Endothelial cell of umbilical vein (primary cell): ENCODE measurements at regions of chr7 and their contacts with region 1.

Region 1: DNA sequence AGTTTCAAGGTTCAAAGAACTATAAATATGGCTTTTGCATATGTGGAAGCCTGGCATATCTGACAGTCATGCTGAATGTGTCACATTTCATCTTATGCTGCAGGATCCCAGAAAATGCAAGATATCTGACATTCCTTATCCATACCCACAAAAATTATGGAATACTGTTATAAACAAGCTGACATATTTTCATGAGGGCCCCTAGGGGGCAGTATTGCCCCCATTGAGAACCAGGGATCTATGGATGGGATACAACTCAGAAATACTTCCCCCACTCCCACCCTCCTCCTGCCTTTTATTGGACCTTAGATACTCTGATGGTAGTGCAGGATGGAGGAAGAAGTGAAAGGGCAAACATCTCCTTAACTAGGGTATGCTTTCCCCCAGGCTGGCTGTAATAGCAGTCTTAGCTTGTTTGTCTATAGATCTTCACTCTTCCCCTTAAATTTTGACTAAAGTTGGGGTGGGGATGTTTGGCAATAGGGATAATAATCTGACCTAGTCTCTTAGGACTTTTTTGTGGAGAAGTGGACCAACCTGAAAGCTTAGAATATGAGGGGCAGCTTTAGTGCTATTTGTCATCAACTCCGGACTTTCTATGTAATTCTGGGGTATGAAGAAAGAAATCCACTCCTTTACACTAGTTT is 3.5 kb upstream of the GNGT1 start:
- DNase-seq: peak; percentile 83
- H3K4me3 ChIP-seq: no peak overlapping the region
- H3K27ac ChIP-seq: no peak overlapping the region
- H3K4me1 ChIP-seq: peaks cover 7% of the 10 kb centered on the region
- H3K27me3 ChIP-seq: peaks cover 3 to 12% of the 10 kb centered on the region in 2 experiments
- CTCF ChIP-seq: peak; percentile 75
- POLR2A ChIP-seq: no peak

Region 2: GRCh38 chr7:93799750-93800357 is 103.0 kb before region 1 on chr7:
- CTCF ChIA-PET with region 1: interaction called, 13 read pairs
- POLR2A ChIA-PET with region 1: no interaction called
- dilution Hi-C with region 1: no loop called
- intact Hi-C with region 1: loop called (anchors 1 kb)
- DNase-seq: peak; percentile 43
- H3K4me3 ChIP-seq: no peak overlapping the region
- H3K27ac ChIP-seq: no peak overlapping the region
- H3K4me1 ChIP-seq: no peaks in the 10 kb centered on the region
- H3K27me3 ChIP-seq: no peaks in the 10 kb centered on the region
- CTCF ChIP-seq: peak; percentile 32 to 45
- POLR2A ChIP-seq: no peak

Region 3: DNA sequence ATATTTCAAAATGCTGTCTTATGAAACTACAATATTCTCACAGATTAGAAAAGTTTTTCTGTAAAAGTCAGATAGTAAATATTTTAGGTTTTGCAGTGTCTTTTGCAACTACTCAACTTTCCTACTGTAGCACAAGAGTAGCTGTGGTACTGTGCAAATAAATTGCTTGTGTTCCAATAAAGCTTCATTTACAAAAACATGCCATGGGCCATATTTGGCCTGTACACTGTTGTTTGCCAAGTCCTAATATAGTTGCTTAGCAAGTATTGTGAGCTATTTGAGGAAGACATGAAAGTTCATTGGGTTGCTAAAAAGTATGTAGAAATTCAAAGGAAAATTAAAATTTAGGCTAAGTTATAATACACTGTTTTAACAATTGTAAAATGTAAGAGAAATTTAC is 92.3 kb before region 1 on chr7:
- CTCF ChIA-PET with region 1: no interaction called
- POLR2A ChIA-PET with region 1: no interaction called
- dilution Hi-C with region 1: no loop called
- intact Hi-C with region 1: no loop called
- DNase-seq: no peak
- H3K4me3 ChIP-seq: no peak overlapping the region
- H3K27ac ChIP-seq: no peak overlapping the region
- H3K4me1 ChIP-seq: no peaks in the 10 kb centered on the region
- H3K27me3 ChIP-seq: peaks cover 0 to 2% of the 10 kb centered on the region in 2 experiments
- CTCF ChIP-seq: no peak
- POLR2A ChIP-seq: no peak

Region 4: DNA sequence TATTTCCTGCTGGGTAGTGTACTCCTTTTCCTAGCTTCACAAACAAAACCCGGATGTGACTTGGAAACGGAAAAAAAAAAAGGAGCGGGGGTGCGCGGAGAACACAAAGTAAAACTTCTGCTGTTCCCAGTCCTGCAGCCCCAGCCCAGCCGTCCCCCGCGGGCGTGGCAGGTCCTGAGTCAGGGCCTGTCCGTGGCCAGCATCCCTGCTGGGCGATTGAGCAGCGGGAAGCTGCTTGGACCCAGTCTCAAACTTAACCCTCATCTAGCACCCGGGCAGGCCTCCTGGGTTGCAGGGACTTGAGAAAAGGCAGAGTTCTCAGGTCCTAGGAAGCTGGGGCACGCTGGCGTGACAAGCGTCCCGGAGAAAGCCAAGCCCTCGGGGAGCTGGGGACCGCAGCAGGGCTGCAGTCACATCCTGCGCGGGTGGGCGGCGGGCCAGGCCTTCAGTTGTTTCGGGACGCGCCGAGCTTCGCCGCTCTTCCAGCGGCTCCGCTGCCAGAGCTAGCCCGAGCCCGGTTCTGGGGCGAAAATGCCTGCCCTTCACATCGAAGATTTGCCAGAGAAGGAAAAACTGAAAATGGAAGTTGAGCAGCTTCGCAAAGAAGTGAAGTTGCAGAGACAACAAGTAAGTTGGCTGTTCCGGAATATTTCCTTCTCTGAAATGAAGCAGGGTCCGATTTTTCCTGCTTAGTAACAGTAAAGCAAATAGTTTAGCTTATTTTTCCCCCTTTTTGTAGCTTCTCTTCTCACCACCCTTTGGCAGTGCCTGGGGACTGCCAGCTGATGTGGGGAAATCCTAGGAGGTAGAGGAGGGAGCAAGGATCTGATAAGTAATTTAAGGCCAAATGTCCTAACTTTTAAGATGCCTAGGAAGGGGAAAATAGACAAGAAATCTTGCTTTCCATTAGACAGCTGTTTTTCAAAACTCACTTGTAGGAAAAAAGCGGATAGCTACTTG is 19.0 kb after region 1 on chr7 and contains the start of gene GNG11:
- CTCF ChIA-PET with region 1: interaction called, 34 read pairs
- POLR2A ChIA-PET with region 1: no interaction called
- dilution Hi-C with region 1: no loop called
- intact Hi-C with region 1: loop called (anchors 1 kb)
- DNase-seq: peak; percentile 90
- H3K4me3 ChIP-seq: peak within 1 kb of the TSS; percentile 95 to 100 (median 100)
- H3K27ac ChIP-seq: peak within 1 kb of the TSS; percentile 99
- H3K4me1 ChIP-seq: peaks cover 25% of the 10 kb centered on the region
- H3K27me3 ChIP-seq: no peaks in the 10 kb centered on the region
- CTCF ChIP-seq: no peak
- POLR2A ChIP-seq: peak; percentile 86
- total RNA-seq, gene GNG11: 208 and 215 TPM in 2 replicates

Region 5: DNA sequence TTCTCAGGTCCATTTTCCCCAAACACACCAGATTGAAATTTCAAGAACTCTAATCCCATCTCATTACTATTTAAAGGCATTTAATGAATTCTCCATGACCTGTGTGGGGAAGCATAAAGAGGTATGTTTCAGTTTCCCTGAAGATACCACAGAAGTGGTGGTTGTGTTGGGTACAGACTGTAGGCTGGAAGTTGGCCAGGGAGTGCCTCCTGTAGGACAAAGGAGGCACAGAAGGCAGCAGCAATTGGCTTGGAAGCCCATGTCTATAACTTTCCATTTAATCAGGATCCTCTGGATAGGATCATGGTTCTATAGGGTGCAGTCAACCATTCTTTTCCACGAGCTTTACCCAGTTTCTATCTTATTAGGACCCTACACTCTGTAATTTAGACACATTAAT is 109.8 kb after region 1 on chr7:
- CTCF ChIA-PET with region 1: interaction called, 13 read pairs
- POLR2A ChIA-PET with region 1: no interaction called
- dilution Hi-C with region 1: no loop called
- intact Hi-C with region 1: no loop called
- DNase-seq: no peak
- H3K4me3 ChIP-seq: no peak overlapping the region
- H3K27ac ChIP-seq: no peak overlapping the region
- H3K4me1 ChIP-seq: no peaks in the 10 kb centered on the region
- H3K27me3 ChIP-seq: peaks cover 3 to 9% of the 10 kb centered on the region in 2 experiments
- CTCF ChIP-seq: no peak
- POLR2A ChIP-seq: no peak

Region 6: DNA sequence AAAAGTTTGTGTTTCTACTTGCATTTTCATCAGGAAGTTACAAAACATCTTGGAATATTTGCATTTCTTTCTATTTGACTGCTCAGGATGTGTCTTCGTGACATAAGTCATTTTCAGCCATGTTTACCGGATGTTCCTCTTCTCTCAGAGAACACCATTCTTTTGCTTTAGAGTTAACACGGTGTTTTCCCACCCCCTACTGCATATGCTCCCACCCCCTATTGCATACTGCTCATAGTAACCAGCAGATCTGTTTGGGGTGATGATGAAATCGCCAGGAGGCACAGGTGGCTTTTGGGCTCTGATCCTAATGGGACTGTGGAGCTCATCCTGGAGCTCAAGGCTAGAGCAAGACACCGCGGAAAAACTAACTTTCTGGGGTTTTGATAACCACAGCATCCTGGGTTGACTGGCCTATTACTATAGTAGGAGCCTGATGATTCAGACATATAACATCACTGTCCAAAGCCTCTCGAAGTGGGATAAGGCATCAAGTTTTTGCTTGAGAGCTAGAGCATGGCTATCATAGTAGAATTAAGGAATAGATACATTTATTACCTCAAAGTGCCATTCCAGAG is 166.4 kb after region 1 on chr7:
- CTCF ChIA-PET with region 1: interaction called, 13 read pairs
- POLR2A ChIA-PET with region 1: interaction called, 7 read pairs
- dilution Hi-C with region 1: no loop called
- intact Hi-C with region 1: loop called (anchors 1 kb)
- DNase-seq: no peak
- H3K4me3 ChIP-seq: no peak overlapping the region
- H3K27ac ChIP-seq: no peak overlapping the region
- H3K4me1 ChIP-seq: peaks cover 20% of the 10 kb centered on the region
- H3K27me3 ChIP-seq: peaks cover 50 to 74% of the 10 kb centered on the region in 2 experiments
- CTCF ChIP-seq: no peak
- POLR2A ChIP-seq: no peak

Region 7: DNA sequence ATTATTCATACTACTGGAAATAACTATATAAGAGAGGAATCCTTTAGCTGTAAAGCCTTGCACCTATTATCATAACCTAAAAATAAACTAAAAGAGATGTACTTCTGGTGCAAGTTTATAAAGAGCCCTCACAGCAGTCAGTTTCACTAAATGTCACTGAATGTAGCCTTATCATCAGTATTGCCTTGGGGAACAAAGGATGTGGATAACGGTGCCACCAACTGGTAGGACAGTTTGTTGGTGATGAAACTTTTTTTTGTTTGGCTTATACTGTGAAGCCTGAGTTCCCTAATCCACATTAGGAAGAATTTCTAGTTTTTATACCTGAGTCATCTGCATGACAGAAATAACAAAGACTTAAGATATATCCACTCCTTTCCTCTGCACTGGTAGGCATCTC is 373.9 kb after region 1 on chr7:
- CTCF ChIA-PET with region 1: interaction called, 4 read pairs
- POLR2A ChIA-PET with region 1: no interaction called
- dilution Hi-C with region 1: no loop called
- intact Hi-C with region 1: loop called (anchors 2 kb)
- DNase-seq: peak; percentile 57
- H3K4me3 ChIP-seq: no peak overlapping the region
- H3K27ac ChIP-seq: no peak overlapping the region
- H3K4me1 ChIP-seq: no peaks in the 10 kb centered on the region
- H3K27me3 ChIP-seq: no peaks in the 10 kb centered on the region
- CTCF ChIP-seq: peak; percentile 25 to 29
- POLR2A ChIP-seq: no peak